Activated naive CD4-positive, alpha-beta T cell treated with anti-CD3 and anti-CD28 coated beads, Interleukin-2, amount 10 ng/mL, durations not matched to agents 7 days and 5 days (primary cell): ENCODE measurements at regions of chr12 and their contacts with region 1.

Region 1: DNA sequence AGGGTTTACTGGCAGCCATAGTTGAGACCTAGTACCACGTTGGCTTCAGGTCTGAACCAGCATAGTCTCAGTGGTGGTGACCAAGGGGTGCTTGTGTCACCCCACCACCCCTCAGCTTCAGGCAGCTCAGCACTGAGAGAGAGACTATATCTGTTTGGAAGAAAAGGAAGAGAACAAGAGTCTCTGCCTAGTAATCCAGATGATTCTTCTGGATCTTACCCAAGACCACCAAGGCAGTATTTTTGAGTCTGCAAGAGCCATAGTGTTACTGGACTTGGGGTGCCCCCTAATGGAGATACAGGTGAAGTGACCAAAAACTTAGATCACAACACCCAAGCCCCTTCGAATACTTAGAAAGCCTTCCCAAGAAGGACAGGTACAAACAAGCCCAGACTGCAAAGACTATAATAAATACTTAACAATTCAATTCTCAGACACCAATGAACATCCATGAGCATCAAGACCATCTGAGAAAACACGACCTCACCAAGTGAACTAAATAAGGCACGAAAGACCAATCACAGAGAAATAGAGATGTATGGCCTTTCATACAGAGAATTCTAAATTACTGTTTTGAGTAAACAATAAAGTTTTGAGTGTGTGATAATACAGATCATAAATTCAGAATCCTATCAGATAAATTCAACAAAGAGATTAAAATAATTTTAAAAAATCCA is 107.0 kb downstream of the HELB start:
- DNase-seq: peak; percentile 59
- H3K4me3 Mint-ChIP-seq: no peak overlapping the region
- H3K27ac Mint-ChIP-seq: no peak overlapping the region
- H3K4me1 Mint-ChIP-seq: no peaks in the 10 kb centered on the region
- H3K27me3 Mint-ChIP-seq: peaks cover 5% of the 10 kb centered on the region

Region 2: GRCh38 chr12:66144791-66145754 is 264.3 kb before region 1 on chr12:
- CTCF ChIA-PET with region 1: interaction called, 24 read pairs
- DNase-seq: no peak
- H3K4me3 Mint-ChIP-seq: no peak overlapping the region
- H3K27ac Mint-ChIP-seq: peak overlapping the region; percentile 75
- H3K4me1 Mint-ChIP-seq: peaks cover 16% of the 10 kb centered on the region
- H3K27me3 Mint-ChIP-seq: no peaks in the 10 kb centered on the region

Region 3: DNA sequence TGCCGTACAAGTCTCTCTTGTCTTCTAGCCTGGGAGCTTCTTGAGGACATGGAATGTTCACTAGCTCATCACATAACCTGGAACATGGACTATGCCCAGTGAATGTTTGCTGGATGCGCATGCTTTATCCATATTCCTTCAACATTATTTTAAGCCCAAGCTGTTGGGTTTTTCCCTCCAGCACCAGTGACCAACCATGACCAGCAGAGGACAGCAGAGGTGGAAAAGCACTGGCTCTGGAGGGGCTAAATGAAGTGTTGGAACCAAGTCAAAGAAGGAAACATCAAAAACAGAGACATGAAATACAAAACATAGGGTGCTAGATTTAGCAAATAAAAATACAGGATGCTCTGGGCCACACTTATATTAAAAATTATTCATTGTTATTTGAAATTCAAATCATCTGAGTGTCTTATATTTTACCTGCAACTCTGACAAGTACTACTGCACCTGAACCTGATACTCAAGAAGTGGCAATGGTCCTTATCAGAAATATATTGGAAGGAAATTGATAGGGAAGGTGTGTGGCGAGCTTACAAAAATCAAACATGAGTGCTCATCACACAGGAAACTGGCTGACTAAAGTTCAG is 130.1 kb before region 1 on chr12:
- CTCF ChIA-PET with region 1: interaction called, 90 read pairs
- DNase-seq: peak; percentile 71
- H3K4me3 Mint-ChIP-seq: no peak overlapping the region
- H3K27ac Mint-ChIP-seq: no peak overlapping the region
- H3K4me1 Mint-ChIP-seq: peaks cover 30% of the 10 kb centered on the region
- H3K27me3 Mint-ChIP-seq: peaks cover 3% of the 10 kb centered on the region

Region 4: DNA sequence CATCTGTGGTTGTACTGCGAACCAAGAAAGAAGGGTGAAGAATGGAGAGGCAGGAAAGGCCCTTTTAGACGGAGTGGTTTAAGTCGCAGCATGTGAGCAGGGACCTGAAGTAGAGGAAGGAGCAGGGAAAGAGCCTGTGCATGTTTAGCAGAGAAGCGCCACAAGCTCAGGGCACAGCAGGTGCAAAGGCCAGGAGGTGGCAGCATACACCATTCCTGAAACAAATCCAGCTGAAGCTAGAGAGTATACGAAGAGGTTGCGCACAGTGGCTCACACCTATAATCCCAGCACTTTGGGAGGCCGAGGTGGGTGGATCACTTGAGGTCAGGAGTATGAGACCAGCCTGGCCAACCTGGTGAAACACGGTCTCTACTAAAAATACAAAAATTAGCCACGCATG is 57.1 kb before region 1 on chr12:
- CTCF ChIA-PET with region 1: interaction called, 13 read pairs
- DNase-seq: peak; percentile 39
- H3K4me3 Mint-ChIP-seq: no peak overlapping the region
- H3K27ac Mint-ChIP-seq: no peak overlapping the region
- H3K4me1 Mint-ChIP-seq: no peaks in the 10 kb centered on the region
- H3K27me3 Mint-ChIP-seq: no peaks in the 10 kb centered on the region